ENCODE measurements at regions of chr17 and their contacts with region 1.

Region 1: GRCh38 chr17:68291844-68292695 is 775 bp downstream of the ARSG start:
- DNase-seq: peak; percentile 88 to 99 (median 95)
- ATAC-seq: peak; percentile 70
- H3K4me3 ChIP-seq: peak overlapping the region; percentile 56 to 89
- H3K4me3 Mint-ChIP-seq: peak overlapping the region; percentile 82
- H3K27ac ChIP-seq: peak overlapping the region; percentile 66 to 97
- H3K27ac Mint-ChIP-seq: peak overlapping the region; percentile 91
- H3K4me1 ChIP-seq: peaks cover 60% of the 10 kb centered on the region
- H3K4me1 Mint-ChIP-seq: peaks cover 60% of the 10 kb centered on the region
- H3K27me3 ChIP-seq: no peaks in the 10 kb centered on the region
- H3K27me3 Mint-ChIP-seq: no peaks in the 10 kb centered on the region
- CTCF ChIP-seq: no peak

Region 2: DNA sequence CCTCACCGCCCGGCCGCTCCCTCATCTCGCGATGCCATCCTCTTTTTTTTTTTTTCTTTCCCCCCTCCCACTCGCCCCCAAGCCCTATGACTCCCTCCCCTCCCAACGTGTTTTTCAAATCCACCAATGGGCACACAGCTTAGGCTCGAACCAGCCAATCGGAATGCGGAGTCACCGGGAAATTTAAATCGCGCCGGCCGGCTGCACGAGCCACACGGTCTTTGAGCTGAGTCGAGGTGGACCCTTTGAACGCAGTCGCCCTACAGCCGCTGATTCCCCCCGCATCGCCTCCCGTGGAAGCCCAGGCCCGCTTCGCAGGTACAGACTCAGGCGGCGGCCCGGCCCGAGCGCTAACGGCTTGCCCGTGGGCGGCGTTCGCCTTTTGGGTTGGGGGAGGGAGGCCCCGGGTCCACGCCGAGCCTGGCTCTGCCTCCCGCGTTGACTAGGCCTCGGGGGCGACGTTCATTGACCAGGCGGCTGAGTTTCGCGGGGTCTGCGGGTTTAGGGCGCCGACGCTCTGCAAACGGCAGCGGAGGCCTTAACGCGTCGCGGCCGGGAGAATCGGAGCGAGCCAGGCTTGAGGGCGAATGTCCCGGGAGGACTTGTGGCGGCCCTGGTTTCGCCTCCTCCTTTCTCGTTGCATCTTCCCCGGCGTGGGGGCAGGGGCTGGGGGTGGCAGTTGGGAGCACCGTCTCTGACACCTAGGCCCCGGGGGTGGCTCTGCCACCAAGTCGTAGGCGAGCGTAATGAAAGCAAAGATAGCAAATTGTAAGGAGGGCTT is 256.4 kb before region 1 on chr17 and contains the start of gene KPNA2:
- CTCF ChIA-PET with region 1: no interaction called
- POLR2A ChIA-PET with region 1: no interaction called
- intact Hi-C with region 1: loop called in 1 of 2 experiments (anchors 1 kb)
- DNase-seq: peak; percentile 80 to 96 (median 89)
- ATAC-seq: peak; percentile 84
- H3K4me3 ChIP-seq: peak within 1 kb of the TSS; percentile 97 to 99
- H3K4me3 Mint-ChIP-seq: peak within 1 kb of the TSS; percentile 90
- H3K27ac ChIP-seq: peak within 1 kb of the TSS; percentile 88 to 90
- H3K27ac Mint-ChIP-seq: peak within 1 kb of the TSS; percentile 95
- H3K4me1 ChIP-seq: peaks cover 8% of the 10 kb centered on the region
- H3K4me1 Mint-ChIP-seq: peaks cover 13% of the 10 kb centered on the region
- H3K27me3 ChIP-seq: no peaks in the 10 kb centered on the region
- H3K27me3 Mint-ChIP-seq: no peaks in the 10 kb centered on the region
- CTCF ChIP-seq: no peak
- total RNA-seq, gene KPNA2: 111 to 121 TPM

Region 3: DNA sequence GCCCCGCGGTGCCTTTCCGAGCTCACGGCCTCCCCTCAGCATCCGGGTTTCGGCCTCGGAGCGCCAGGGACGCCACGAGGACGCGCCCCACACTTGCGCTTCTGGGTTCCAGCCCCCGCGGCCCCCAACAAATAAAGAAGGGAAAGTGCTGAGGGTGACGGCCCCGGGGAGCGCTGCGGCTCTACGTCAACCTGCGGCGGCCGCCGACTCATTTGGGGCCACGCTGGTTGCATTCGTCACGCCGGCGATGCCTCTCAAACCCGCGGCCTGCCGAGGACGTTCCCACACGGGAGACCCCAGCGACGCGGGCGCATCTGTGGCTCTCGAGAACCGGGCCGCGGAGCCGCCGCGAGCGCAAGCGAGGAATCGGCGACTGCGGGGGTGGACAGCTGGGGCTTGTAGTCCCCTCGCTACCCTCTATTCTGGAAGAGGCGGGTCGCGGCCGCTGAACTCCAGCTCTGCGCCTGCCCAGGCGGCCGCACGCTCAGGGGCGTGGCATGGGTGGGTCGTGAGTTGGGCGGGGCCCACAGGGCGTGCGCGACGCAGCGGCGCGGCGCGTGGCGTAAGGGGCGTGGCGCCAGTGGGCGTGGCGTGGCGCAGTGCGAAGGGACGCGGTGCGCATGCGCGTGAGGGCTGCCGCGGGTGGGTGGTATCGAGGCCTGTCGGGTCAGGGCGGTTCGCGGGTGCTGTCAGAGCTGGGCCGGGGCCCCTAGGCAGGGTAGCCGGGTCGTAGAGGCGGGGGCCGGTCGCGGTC is 44.4 kb before region 1 on chr17 and contains the start of gene AMZ2:
- CTCF ChIA-PET with region 1: interaction called, 4 read pairs
- POLR2A ChIA-PET with region 1: interaction called, 42 read pairs
- intact Hi-C with region 1: loop called (anchors 1 to 5 kb)
- DNase-seq: peak; percentile 94 to 99 (median 98)
- ATAC-seq: peak; percentile 91
- H3K4me3 ChIP-seq: peak within 1 kb of the TSS; percentile 70 to 94
- H3K4me3 Mint-ChIP-seq: peak within 1 kb of the TSS; percentile 96
- H3K27ac ChIP-seq: peak within 1 kb of the TSS; percentile 93 to 96
- H3K27ac Mint-ChIP-seq: peak within 1 kb of the TSS; percentile 98
- H3K4me1 ChIP-seq: peaks cover 34% of the 10 kb centered on the region
- H3K4me1 Mint-ChIP-seq: peaks cover 42% of the 10 kb centered on the region
- H3K27me3 ChIP-seq: no peaks in the 10 kb centered on the region
- H3K27me3 Mint-ChIP-seq: no peaks in the 10 kb centered on the region
- CTCF ChIP-seq: no peak
- total RNA-seq, gene AMZ2: 61.0 to 71.1 TPM

Region 4: DNA sequence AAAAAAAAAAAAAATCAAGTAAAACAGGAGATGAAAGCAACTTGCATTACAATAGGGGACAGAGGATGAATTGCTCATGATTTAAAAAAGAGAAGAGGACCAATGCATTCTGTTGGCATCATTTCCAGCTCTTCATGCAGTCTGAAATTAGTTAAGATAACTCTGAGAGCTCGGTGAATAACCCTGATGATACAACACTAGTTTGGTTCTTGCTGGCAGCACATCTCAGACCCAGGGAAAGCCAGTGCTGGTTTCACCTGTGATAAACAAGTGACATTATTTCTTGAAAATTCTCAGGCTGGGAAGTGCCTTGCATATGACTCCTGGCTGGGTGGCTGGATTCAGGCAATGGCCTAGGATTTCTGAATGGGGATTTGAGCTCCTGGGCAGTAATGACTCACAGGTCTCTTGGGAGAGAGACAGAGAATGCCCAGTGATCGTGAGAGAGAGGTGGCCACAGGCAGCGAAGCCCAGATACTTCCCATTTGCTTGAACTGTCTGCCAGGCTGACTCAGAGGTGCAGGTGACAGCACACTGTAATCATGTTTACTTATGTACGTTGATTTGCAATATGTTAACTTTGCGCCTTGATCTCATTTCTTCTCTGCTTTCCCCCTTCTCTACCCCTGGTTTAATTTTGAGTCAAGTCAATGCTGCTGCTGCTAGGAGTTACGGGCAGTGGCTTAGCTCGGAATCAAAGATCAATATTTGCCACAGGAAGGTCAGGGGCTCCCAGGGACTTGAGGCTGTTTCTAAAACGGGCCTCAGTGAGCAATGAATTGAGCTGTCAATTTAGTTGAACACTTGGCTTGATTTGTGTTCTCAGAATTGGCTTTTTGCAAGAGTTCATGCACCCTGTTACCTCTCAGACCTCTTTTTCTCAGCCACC is 26.3 kb after region 1 on chr17:
- CTCF ChIA-PET with region 1: no interaction called
- POLR2A ChIA-PET with region 1: interaction called, 18 read pairs
- intact Hi-C with region 1: loop called in 1 of 2 experiments (anchors 2 kb)
- DNase-seq: peak in 1 of 9 experiments; percentile 31
- ATAC-seq: no peak
- H3K4me3 ChIP-seq: no peak overlapping the region
- H3K4me3 Mint-ChIP-seq: no peak overlapping the region
- H3K27ac ChIP-seq: no peak overlapping the region
- H3K27ac Mint-ChIP-seq: no peak overlapping the region
- H3K4me1 ChIP-seq: peaks cover 36% of the 10 kb centered on the region
- H3K4me1 Mint-ChIP-seq: peaks cover 46% of the 10 kb centered on the region
- H3K27me3 ChIP-seq: no peaks in the 10 kb centered on the region
- H3K27me3 Mint-ChIP-seq: no peaks in the 10 kb centered on the region
- CTCF ChIP-seq: no peak

Region 5: DNA sequence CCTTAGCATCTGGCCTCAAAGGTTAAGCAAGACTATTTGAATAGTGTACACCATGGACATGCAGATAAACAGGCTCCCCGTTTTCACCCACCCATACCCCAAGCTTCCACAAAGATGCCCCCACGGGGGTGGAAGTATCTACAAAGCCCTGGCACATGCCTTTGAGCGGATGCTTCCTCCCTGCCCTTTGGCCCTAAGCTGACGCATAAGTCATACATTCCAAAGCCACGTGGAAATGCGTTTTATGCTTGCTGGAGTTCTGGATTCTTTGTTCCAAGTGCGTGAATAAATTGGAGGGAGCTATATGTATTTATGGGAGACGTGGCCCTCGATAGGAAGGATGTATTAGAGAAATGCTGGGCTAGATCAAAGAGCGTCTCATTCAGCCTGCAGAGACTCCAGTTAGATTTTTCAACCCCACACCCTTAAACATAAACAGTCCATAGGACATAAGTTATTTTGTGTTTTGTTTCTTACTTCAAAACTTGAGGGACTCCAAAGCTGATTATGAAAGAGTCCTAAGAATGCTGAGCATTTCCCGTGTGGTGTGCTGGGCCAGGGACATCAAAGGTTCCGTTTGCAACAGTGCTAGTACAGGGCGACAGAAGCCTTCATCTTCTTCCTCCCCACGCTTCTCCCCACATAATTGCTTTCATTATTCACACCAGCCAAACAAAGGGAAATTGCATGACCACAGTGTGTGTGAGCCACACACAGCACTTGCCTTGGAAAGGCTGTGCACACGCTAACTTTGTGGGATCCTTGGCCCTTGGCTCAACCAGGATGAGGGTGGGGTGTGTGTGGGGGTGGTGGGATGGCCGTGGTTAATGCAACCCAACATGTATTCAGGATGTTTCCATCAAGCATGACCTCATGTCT is 91.6 kb after region 1 on chr17:
- CTCF ChIA-PET with region 1: no interaction called
- POLR2A ChIA-PET with region 1: interaction called, 13 read pairs
- intact Hi-C with region 1: no loop called
- DNase-seq: peak in 3 of 9 experiments; percentile 34 to 59 (median 36)
- ATAC-seq: peak; percentile 48
- H3K4me3 ChIP-seq: peak overlapping the region in 1 of 2 experiments; percentile 11
- H3K4me3 Mint-ChIP-seq: peak overlapping the region; percentile 38
- H3K27ac ChIP-seq: peak overlapping the region in 1 of 2 experiments; percentile 23
- H3K27ac Mint-ChIP-seq: peak overlapping the region; percentile 10
- H3K4me1 ChIP-seq: peaks cover 17% of the 10 kb centered on the region
- H3K4me1 Mint-ChIP-seq: peaks cover 27% of the 10 kb centered on the region
- H3K27me3 ChIP-seq: no peaks in the 10 kb centered on the region
- H3K27me3 Mint-ChIP-seq: no peaks in the 10 kb centered on the region
- CTCF ChIP-seq: no peak

Region 6: GRCh38 chr17:68457539-68458259 is 165.6 kb after region 1 on chr17:
- CTCF ChIA-PET with region 1: interaction called, 3 read pairs
- POLR2A ChIA-PET with region 1: interaction called, 54 read pairs
- intact Hi-C with region 1: loop called in 1 of 2 experiments (anchors 1 kb)
- DNase-seq: peak; percentile 96 to 99 (median 98)
- ATAC-seq: peak; percentile 96
- H3K4me3 ChIP-seq: peak overlapping the region; percentile 55 to 66
- H3K4me3 Mint-ChIP-seq: peak overlapping the region; percentile 83
- H3K27ac ChIP-seq: peak overlapping the region; percentile 58 to 78
- H3K27ac Mint-ChIP-seq: peak overlapping the region; percentile 92
- H3K4me1 ChIP-seq: peaks cover 45% of the 10 kb centered on the region
- H3K4me1 Mint-ChIP-seq: peaks cover 58% of the 10 kb centered on the region
- H3K27me3 ChIP-seq: no peaks in the 10 kb centered on the region
- H3K27me3 Mint-ChIP-seq: no peaks in the 10 kb centered on the region
- CTCF ChIP-seq: no peak